A673 (cell line): ENCODE measurements at regions of chr10 and their contacts with region 1.

Region 1: DNA sequence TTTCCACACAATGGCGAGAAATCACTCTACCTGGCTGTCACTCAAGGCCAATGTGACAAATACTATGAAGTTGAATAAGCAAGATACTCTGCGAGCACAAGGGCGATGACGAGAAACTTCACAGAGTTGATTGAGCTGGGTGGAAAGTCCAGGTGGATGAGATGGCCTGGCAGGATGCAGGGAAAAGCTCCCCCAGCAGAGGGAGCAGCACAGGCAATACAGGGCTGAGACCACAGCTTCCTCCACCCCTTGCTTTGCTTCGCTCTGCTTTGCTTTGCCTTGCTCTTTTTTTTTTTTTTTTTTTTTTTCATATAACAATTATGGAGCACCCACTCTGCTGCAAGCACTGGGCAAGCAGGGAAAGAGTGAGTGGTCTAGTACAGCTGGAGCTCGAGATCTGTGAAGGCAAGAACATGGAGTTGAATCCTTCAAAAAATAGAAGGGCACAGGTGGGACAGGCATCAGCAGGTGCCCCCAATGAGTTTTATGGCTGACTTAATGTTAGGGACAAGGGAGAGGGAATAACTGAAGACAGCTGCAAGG is 88.3 kb downstream of the CABCOCO1 start:
- DNase-seq: peak; percentile 83
- H3K4me3 ChIP-seq: no peak overlapping the region
- H3K27ac ChIP-seq: peak overlapping the region; percentile 78
- H3K4me1 ChIP-seq: peaks cover 70% of the 10 kb centered on the region
- H3K27me3 ChIP-seq: no peaks in the 10 kb centered on the region
- CTCF ChIP-seq: peak; percentile 87

Region 2: DNA sequence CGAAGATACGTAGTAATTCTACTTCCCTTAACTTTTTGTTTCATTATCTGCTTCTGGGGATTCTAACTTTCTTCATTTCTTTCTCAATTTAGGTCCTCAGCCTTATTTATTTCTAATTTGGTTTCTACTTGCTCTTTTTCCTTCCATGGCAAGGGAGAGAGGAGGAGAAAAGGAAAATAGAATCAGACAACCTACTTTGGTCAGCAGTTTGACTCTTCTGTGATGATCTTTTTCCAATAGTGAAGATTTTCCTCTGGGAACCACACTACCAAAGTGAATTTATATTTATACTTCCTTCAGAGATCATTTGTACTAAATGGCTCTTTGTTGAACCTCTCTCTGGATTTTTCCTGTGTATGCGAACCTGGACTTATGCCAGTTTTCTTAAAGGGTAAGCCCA is 388.0 kb before region 1 on chr10:
- CTCF ChIA-PET with region 1: interaction called, 10 read pairs
- POLR2A ChIA-PET with region 1: no interaction called
- intact Hi-C with region 1: no loop called
- DNase-seq: no peak
- H3K4me3 ChIP-seq: no peak overlapping the region
- H3K27ac ChIP-seq: no peak overlapping the region
- H3K4me1 ChIP-seq: no peaks in the 10 kb centered on the region
- H3K27me3 ChIP-seq: no peaks in the 10 kb centered on the region
- CTCF ChIP-seq: no peak

Region 3: GRCh38 chr10:61821153-61821552 is 70.2 kb after region 1 on chr10:
- CTCF ChIA-PET with region 1: interaction called, 14 read pairs
- POLR2A ChIA-PET with region 1: no interaction called
- intact Hi-C with region 1: no loop called
- DNase-seq: no peak
- H3K4me3 ChIP-seq: no peak overlapping the region
- H3K27ac ChIP-seq: no peak overlapping the region
- H3K4me1 ChIP-seq: peaks cover 7% of the 10 kb centered on the region
- H3K27me3 ChIP-seq: no peaks in the 10 kb centered on the region
- CTCF ChIP-seq: no peak

Region 4: DNA sequence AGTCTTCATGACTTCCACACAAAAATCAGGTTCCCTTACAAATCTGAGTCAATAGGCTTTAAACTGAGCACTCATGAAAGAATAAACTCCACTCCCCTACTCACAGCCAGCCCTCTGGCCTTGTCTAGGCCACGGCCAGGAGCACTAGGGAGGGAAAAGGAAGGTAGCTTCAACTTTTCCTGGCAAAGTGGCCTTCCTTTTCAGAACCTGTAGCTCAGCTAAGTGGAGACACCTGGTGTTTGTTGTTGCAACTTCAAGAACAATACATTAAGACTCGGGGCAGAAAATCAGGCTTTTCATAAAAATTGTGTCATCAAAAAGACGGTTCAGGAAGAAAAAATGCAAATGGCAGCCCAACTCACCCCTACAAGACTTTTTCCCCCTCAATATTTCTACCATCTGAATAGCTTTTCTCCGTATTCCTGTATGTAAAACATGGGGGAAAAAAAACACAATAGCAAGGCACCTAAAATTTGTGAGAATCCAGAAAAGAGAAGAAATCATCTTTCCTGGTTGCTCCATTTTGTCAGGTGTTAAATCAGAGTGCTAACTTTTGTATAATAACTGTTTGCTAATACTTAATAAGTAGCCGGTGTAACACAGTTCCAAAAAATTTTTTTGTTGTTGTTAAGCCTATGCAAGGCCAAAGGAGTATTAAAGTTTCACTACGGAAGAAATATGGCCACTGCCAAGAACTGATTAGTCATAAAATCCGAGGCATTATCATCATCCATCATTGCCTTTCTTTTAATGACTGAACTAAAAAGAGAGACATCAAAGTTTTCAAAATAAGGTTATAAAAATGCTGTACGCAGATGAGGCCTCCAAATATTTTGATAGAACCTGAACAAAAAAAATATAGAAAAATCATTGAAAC is 84.3 kb after region 1 on chr10:
- CTCF ChIA-PET with region 1: interaction called, 6 read pairs
- POLR2A ChIA-PET with region 1: no interaction called
- intact Hi-C with region 1: loop called (anchors 2 kb)
- DNase-seq: peak; percentile 80
- H3K4me3 ChIP-seq: peak overlapping the region; percentile 0
- H3K27ac ChIP-seq: peak overlapping the region; percentile 77
- H3K4me1 ChIP-seq: peaks cover 39% of the 10 kb centered on the region
- H3K27me3 ChIP-seq: no peaks in the 10 kb centered on the region
- CTCF ChIP-seq: peak; percentile 57

Region 5: DNA sequence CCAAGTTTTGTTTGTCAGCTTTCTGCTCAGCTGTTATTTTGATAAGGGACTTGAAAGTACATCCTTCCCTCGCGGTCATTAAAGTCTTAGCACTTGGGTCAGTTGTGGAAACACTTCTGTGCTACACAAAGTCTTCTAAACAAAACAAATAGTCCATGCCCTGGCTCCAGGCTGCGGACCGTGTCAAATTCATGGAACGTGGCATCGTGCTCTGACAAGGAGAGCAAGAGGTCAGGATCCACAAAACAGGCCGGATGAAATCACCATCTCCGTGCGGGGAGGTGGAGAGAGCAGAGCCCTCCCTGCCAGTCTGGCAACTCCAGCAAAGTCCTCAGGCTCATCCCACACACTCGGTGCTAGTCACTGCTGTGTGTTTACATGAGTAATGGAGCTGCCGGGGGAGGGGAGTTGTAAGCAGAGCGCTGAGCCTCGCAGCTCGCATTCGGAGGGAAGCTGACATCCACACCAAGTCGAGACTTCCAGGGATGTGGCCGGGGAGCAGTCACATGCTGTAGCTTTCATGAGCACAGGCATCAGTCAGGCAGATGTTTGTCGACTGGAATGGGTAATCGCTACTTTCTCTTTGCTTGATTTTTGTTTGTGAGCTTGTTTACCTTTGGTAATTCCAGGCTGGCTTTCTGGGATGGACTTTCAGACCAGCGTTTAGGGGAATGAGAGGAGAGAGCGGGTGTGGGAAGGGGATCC is 298.1 kb after region 1 on chr10:
- CTCF ChIA-PET with region 1: no interaction called
- POLR2A ChIA-PET with region 1: no interaction called
- intact Hi-C with region 1: loop called (anchors 10 kb)
- DNase-seq: peak; percentile 89
- H3K4me3 ChIP-seq: peak overlapping the region; percentile 53
- H3K27ac ChIP-seq: peak overlapping the region; percentile 89
- H3K4me1 ChIP-seq: peaks cover 61% of the 10 kb centered on the region
- H3K27me3 ChIP-seq: no peaks in the 10 kb centered on the region
- CTCF ChIP-seq: no peak

Region 6: DNA sequence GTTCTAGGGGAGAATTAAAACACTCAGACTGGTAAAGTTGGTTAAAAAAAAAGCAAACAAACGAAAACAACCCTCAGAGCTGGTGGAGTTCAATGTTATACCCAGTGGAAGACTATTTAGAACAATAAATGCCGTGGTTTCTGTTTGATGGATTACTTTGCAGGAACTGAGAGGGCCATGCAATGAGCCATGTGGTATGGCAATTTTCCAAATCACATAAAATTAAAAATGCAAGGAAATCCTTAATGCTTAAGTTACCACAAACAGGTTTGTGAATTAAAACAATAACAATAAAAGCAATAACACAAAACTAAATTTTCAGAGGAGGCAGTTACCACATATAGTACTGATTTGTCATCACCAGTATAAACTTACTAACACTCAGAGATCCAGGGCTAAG is 420.8 kb after region 1 on chr10:
- CTCF ChIA-PET with region 1: no interaction called
- POLR2A ChIA-PET with region 1: no interaction called
- intact Hi-C with region 1: no loop called
- DNase-seq: peak; percentile 54
- H3K4me3 ChIP-seq: no peak overlapping the region
- H3K27ac ChIP-seq: peak overlapping the region; percentile 16
- H3K4me1 ChIP-seq: peaks cover 17% of the 10 kb centered on the region
- H3K27me3 ChIP-seq: no peaks in the 10 kb centered on the region
- CTCF ChIP-seq: no peak

Region 7: DNA sequence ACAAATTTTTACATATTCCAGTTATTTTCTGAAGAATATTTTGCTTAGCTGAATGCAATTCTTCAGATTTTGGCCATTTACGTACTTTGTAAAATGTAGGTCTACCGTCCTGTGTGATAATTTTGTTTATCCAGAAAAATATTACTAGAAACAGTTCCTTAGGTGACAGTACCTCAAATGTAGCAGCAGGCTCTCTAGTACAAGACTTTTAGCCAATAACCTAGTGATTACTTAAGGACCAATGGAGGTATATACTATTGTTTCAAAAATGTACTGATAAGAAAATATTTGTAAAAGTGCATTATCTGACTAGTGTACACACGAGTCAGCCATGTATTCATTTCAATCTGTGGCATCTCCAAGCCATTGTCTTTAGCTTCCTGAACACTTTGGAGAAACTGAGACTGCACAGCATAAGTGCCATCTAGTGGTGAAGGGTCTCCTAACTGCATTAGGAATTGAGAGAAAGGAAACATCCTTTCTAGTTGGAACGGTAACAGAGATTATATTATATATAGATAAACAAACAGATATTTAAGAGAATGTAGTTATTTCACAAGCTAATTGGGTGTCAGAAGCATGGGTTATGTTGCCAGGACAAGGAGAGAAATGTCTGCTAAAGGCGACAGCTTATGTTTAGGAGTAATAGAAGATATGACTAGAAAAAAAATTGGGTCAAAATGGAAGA is 493.9 kb after region 1 on chr10:
- CTCF ChIA-PET with region 1: interaction called, 3 read pairs
- POLR2A ChIA-PET with region 1: no interaction called
- intact Hi-C with region 1: loop called (anchors 5 kb)
- DNase-seq: peak; percentile 91
- H3K4me3 ChIP-seq: peak overlapping the region; percentile 29
- H3K27ac ChIP-seq: peak overlapping the region; percentile 68
- H3K4me1 ChIP-seq: peaks cover 78% of the 10 kb centered on the region
- H3K27me3 ChIP-seq: no peaks in the 10 kb centered on the region
- CTCF ChIP-seq: peak; percentile 93